Endothelial cell of umbilical vein (primary cell): ENCODE measurements at regions of chr10 and their contacts with region 1.

Region 1: GRCh38 chr10:55410415-55410885 is 609.4 kb upstream of the PCDH15 start:
- DNase-seq: peak; percentile 91
- H3K4me3 ChIP-seq: no peak overlapping the region
- H3K27ac ChIP-seq: peak overlapping the region; percentile 1
- H3K4me1 ChIP-seq: peaks cover 12% of the 10 kb centered on the region
- H3K27me3 ChIP-seq: no peaks in the 10 kb centered on the region
- CTCF ChIP-seq: no peak
- POLR2A ChIP-seq: no peak

Region 2: GRCh38 chr10:55400075-55400849 is 10.2 kb before region 1 on chr10:
- CTCF ChIA-PET with region 1: interaction called, 15 read pairs
- POLR2A ChIA-PET with region 1: no interaction called
- dilution Hi-C with region 1: no loop called
- intact Hi-C with region 1: no loop called
- DNase-seq: peak; percentile 71
- H3K4me3 ChIP-seq: no peak overlapping the region
- H3K27ac ChIP-seq: no peak overlapping the region
- H3K4me1 ChIP-seq: peaks cover 6% of the 10 kb centered on the region
- H3K27me3 ChIP-seq: no peaks in the 10 kb centered on the region
- CTCF ChIP-seq: no peak
- POLR2A ChIP-seq: no peak

Region 3: DNA sequence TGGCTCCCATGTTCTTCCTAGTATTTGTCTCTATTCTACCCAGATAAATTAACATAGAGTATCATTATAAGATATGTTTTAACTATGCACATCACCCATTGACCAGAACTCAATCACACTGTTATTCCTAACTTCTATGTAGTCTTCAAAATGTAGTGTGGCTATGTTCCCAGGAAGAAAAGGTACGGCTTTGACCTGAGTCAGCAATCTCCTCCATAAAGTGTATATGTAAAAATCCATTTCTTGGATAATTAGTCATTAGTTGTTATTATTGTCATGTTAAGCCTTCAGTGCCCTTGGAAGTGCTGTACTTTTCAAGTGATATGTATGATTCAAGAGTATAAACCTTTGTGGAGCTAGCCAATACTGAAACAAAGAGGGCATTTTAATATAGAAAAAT is 1394.6 kb after region 1 on chr10:
- CTCF ChIA-PET with region 1: no interaction called
- POLR2A ChIA-PET with region 1: no interaction called
- dilution Hi-C with region 1: no loop called
- intact Hi-C with region 1: no loop called
- DNase-seq: no peak
- H3K4me3 ChIP-seq: no peak overlapping the region
- H3K27ac ChIP-seq: no peak overlapping the region
- H3K4me1 ChIP-seq: no peaks in the 10 kb centered on the region
- H3K27me3 ChIP-seq: no peaks in the 10 kb centered on the region
- CTCF ChIP-seq: no peak
- POLR2A ChIP-seq: no peak